Activated T-helper 1 cell treated with anti-CD3 and anti-CD28 coated beads, Interleukin-12 subunit alpha, Interleukin-12 subunit beta, Interleukin-2, Interleukin-4 antibody, amounts not matched to agents 30 ng/mL and 10 ng/mL and 1 ng/mL, durations not matched to agents 14 hours and 24 hours and 36 hours (primary cell): ENCODE measurements at regions of chr2 and their contacts with region 1.

Region 1: GRCh38 chr2:241877989-241878970 is 8.8 kb downstream of the RTP5 start:
- DNase-seq: peak; percentile 73
- H3K4me3 Mint-ChIP-seq: no peak overlapping the region
- H3K27ac Mint-ChIP-seq: no peak overlapping the region
- H3K4me1 Mint-ChIP-seq: peaks cover 17% of the 10 kb centered on the region
- H3K27me3 Mint-ChIP-seq: no peaks in the 10 kb centered on the region

Region 2: GRCh38 chr2:240560480-240561326 is 1317.6 kb before region 1 on chr2:
- intact Hi-C with region 1: loop called (anchors 2 kb)
- DNase-seq: peak; percentile 99
- H3K4me3 Mint-ChIP-seq: peak overlapping the region; percentile 90
- H3K27ac Mint-ChIP-seq: peak overlapping the region; percentile 95
- H3K4me1 Mint-ChIP-seq: peaks cover 75% of the 10 kb centered on the region
- H3K27me3 Mint-ChIP-seq: no peaks in the 10 kb centered on the region

Region 3: DNA sequence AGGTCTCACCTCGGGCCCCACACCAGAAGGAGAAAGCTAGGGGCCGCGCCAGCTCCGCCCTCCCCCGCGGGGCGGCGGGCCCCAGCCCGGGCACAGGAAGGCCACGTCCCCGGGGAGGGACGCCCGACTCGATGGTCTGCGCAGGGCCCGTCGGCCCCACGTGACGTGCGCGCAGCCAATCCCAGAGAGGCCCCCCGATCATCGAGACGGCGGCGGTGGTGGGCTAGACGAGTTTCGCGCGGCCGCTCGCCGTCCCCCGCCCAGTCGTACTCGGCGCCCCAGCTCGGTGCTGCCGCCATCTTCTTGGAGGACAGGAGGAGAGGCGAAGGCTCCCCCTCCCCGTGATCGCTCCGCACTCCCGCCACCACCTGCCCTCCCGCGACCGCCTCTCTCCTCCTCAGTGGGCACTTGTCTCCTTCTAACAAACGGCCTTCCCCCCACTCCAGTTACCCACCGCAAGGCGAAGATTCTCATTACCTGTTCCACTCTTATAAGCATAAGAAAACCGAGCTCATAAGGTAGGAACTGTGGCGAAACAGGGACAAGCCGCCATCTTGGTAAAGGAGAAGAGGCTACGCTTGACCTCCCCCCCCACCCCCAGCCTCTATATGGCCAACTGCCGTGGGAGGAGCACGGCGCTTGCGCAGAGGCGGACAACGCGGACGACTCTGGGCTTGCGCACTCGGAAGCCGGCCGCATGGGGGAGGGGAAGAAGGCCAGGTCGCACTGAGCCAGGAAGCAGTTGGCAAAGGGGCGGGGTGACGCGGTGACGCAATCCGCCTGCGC is 563.0 kb before region 1 on chr2 and contains the start of gene HDLBP:
- intact Hi-C with region 1: loop called (anchors 1 kb)
- DNase-seq: peak; percentile 100
- H3K4me3 Mint-ChIP-seq: peak within 1 kb of the TSS; percentile 100
- H3K27ac Mint-ChIP-seq: peak within 1 kb of the TSS; percentile 100
- H3K4me1 Mint-ChIP-seq: peaks cover 74% of the 10 kb centered on the region
- H3K27me3 Mint-ChIP-seq: peaks cover 2% of the 10 kb centered on the region
- total RNA-seq, gene HDLBP: 270 and 273 TPM in 2 replicates

Region 4: DNA sequence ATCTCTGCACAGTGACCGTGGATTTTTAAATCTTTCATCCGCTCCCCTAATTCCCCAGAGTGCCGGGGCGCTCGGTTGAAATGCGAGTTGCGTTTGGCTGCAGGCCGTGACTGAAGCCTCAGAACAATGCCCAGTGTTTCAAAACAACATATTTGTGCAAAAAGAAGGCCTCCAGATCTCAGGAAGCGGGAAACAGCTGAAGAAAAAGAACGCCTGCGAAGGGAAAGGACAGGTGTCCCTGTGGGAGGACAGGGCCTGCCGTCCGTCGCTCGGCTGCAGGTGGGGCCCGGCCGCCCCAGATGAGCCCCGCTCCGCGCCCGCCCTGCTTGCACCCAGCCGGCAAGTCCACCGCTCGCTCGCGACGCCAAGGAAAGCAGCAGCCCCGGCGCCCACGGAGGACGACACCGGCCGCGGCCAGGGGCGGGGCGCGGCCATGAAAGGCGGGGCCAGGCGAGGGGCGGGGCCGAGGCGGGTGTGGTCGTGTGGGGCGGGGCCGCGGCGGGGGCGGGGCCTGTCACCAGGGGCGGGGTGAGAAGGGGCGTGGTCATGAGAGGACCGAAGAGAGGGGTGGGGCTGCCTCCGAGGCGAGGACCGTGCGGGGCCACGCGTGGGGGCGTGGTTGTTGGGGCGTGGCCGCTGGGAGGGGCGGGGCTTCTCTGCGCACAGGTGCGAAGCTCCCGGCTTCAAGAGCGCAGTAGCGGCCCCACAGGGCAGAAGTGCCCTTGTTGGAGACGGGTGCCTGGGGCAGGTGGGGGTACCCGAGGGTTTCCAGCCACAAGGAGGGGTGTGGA is 337.3 kb before region 1 on chr2:
- intact Hi-C with region 1: loop called (anchors 1 kb)
- DNase-seq: peak; percentile 59
- H3K4me3 Mint-ChIP-seq: peak overlapping the region; percentile 70
- H3K27ac Mint-ChIP-seq: no peak overlapping the region
- H3K4me1 Mint-ChIP-seq: no peaks in the 10 kb centered on the region
- H3K27me3 Mint-ChIP-seq: peaks cover 9% of the 10 kb centered on the region

Region 5: DNA sequence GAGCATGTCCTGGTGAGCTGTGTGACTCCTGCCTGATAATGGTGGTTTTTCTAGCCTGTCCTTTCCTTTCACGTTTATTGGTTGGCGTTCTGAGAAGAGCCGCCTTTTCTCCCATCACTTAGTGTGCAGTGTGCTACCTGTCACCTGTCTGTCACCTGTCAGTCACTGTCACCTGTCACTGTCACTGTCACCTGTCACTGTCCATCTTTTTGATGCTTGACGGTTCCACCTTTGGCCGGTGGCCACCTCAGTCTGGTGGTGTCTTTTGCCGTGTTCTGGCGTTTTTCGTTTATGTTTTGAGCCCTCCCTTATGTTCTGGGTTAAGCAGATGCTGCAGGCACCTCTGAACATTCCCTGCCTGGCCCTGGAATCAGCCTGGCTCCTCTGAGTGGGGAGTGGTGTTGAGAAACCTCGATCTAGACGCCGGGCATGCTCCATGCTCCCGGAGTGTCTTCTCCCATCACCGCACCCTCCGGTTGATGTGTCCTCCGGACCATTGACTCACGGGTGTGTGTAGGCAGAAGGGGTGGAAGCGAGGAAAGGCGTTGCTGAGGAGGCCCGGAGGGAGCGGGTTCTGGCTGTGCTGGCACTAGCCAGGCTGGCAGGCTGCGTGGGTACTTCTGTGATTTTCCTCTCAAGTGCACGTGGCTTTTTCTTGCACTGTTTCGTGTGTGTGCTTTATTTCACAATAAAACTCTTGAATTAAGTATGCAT is 212.4 kb before region 1 on chr2:
- intact Hi-C with region 1: loop called (anchors 1 kb)
- DNase-seq: no peak
- H3K4me3 Mint-ChIP-seq: no peak overlapping the region
- H3K27ac Mint-ChIP-seq: peak overlapping the region; percentile 76
- H3K4me1 Mint-ChIP-seq: peaks cover 10% of the 10 kb centered on the region
- H3K27me3 Mint-ChIP-seq: no peaks in the 10 kb centered on the region

Region 6: DNA sequence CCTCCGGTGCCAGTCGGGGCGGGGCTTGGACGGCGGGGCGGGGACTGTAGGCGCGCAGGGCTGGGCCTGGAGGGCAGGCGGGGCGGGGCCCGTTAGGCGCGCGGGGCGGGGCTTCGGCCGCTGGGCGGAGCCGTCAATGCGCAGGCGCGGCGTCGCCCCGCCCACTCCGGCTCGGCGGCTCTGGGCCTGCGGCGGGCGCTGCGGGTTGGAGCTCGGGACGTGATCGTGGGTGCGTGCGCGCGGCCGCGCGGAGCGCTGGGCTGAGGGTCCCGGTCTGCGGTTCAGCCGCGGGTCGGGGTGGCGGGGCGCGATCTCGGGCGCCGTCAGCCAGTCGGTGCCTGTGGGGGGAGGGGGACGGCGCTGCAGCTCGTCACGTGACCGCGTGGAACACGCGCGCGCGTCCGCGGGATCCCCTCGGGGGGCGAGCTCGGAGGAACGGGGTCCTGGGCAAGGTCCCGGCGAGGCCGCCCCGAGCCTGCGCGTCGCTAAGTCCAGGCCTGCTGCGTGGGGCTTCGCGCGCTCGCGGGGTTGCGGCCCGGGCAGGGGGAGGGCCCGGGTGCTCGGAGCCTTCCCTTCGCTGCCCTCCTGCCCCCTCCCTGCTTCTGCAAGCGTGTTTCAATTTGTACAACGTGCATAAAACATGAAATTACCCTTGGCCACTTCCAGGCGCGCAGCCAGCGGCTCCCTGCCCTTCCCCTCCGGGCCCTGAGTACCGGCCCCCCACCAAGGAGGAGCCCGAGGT is 143.6 kb before region 1 on chr2 and contains the start of gene D2HGDH:
- intact Hi-C with region 1: loop called (anchors 1 kb)
- DNase-seq: peak; percentile 89
- H3K4me3 Mint-ChIP-seq: peak within 1 kb of the TSS; percentile 82
- H3K27ac Mint-ChIP-seq: no peak within 1 kb of the TSS
- H3K4me1 Mint-ChIP-seq: peaks cover 41% of the 10 kb centered on the region
- H3K27me3 Mint-ChIP-seq: peaks cover 3% of the 10 kb centered on the region
- total RNA-seq, gene D2HGDH: 27.1 and 28.7 TPM in 2 replicates